ENCODE measurements at regions of chr17 and their contacts with region 1.

Region 1: DNA sequence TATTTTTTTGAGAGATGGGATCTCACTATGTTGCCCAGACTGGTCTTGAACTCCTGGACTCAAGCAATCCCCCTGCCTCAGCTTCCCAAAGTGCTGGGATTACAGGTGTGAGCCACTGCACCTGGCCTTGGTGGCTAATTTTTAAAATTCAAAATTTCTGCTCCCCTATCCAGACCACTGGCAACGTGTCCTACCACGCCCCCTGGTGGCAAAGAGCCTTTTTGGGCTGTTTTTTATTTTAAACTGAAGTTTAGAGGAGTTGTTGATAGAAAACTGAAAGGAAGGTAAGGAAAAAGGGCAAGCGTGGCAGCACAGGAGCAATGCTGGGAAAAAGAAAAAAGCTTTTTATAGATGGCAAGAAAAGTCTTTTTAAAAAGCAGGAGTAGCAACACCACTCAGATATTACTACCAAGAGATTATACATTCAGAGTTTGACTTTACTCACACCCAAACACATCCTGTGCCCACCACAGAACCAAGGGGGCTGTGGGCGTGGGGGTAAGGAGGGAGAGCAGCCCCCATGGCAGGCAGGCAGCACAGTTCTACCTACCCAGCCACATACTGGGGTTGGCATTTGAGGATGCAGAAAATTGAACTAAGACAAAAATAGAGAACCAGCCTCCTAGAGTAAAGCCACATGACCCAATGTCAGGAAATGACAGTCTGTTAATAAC is 4.2 kb upstream of the MXRA7 start:
- DNase-seq: peak; percentile 78
- H3K4me3 Mint-ChIP-seq: no peak overlapping the region
- H3K27ac Mint-ChIP-seq: peak overlapping the region; percentile 86
- H3K4me1 Mint-ChIP-seq: peaks cover 47% of the 10 kb centered on the region
- H3K27me3 Mint-ChIP-seq: no peaks in the 10 kb centered on the region

Region 2: DNA sequence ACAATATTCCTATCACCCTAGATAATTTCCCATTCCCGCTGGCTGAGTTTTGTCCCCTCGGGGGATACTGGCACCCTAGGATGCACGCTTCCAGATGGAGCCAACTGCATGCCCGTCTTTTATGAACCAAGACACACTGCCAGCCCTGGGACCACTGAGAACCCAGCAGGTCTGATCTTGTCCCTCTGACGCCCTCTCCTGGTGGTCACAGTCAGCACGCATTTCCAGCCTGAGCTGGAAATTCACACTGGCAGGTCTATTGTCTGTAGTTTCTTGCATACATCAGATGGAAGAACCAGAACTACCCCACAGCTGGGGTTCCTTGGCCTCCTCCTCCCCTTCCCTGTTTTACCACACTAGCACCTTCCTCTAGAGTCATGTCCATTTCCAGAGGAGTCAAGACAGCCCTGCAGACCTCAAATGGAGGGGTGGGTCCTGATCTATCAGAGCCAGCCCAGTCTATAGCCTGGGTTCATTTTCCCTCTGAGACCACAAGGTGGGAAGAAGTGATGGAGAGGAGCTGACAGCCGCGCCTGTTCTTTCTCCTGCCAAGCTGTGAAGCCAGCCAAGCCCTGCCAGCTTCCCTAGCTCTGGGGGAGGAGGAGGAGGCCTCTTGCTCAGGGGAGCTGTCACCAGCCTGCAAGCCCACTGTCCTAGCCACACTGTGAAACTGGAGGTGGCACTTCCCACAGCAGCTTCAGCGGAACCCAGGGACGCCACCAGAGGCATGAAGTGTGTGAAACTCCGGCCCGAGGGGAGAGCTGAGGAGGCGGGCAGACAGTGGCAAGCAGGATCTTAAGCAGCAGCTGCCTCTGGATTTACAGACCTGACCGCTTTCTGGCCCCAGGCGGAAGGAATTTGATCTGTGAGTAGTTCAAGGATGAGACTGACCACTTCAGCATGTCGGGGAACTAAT is 33.5 kb before region 1 on chr17:
- CTCF ChIA-PET with region 1: interaction called, 20 read pairs
- POLR2A ChIA-PET with region 1: interaction called, 3 read pairs
- DNase-seq: peak; percentile 79
- H3K4me3 Mint-ChIP-seq: no peak overlapping the region
- H3K27ac Mint-ChIP-seq: no peak overlapping the region
- H3K4me1 Mint-ChIP-seq: peaks cover 8% of the 10 kb centered on the region
- H3K27me3 Mint-ChIP-seq: peaks cover 6% of the 10 kb centered on the region

Region 3: GRCh38 chr17:76701471-76701967 is 13.4 kb before region 1 on chr17:
- CTCF ChIA-PET with region 1: interaction called, 12 read pairs
- POLR2A ChIA-PET with region 1: interaction called, 4 read pairs
- DNase-seq: no peak
- H3K4me3 Mint-ChIP-seq: no peak overlapping the region
- H3K27ac Mint-ChIP-seq: no peak overlapping the region
- H3K4me1 Mint-ChIP-seq: peaks cover 14% of the 10 kb centered on the region
- H3K27me3 Mint-ChIP-seq: peaks cover 2% of the 10 kb centered on the region

Region 4: DNA sequence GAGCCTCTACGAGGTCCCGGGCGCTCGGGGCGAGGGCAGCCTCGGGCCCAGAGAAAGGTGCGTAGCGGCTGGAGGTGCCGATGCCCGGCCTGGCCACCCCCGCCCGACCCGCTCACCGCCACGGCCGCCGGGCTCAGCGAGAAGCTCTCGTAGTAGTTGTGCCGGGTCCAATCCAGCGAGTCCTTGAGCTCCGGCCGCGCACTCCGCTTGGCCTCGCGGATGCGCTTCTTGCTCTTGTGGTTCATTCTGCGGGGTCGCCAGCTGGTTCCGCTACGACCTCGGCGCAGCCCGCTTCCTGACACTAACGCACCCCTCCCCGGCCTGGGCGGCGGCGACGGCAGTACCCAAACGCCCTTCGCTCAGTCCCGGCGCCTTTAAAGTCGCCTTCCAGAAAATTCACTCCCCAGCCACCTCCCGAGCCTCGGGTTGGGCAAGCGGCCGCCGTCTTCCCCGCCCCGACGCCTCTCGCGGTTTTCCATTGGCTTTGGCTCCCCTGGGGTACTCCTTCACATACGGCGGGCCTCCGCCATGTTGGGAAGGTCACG is 11.3 kb after region 1 on chr17 and contains the start of gene JMJD6:
- CTCF ChIA-PET with region 1: interaction called, 36 read pairs
- POLR2A ChIA-PET with region 1: interaction called, 59 read pairs
- DNase-seq: peak; percentile 97
- H3K4me3 Mint-ChIP-seq: peak within 1 kb of the TSS; percentile 91
- H3K27ac Mint-ChIP-seq: peak within 1 kb of the TSS; percentile 94
- H3K4me1 Mint-ChIP-seq: peaks cover 58% of the 10 kb centered on the region
- H3K27me3 Mint-ChIP-seq: no peaks in the 10 kb centered on the region
- total RNA-seq, gene JMJD6: 66.8 to 68.0 TPM

Measured in activated CD4-positive, alpha-beta memory T cell treated with anti-CD3 and anti-CD28 coated beads, Interleukin-2, amount 10 ng/mL, durations not matched to agents 7 days and 5 days (primary cell).